ENCODE measurements at regions of chr4 and their contacts with region 1.

Region 1: DNA sequence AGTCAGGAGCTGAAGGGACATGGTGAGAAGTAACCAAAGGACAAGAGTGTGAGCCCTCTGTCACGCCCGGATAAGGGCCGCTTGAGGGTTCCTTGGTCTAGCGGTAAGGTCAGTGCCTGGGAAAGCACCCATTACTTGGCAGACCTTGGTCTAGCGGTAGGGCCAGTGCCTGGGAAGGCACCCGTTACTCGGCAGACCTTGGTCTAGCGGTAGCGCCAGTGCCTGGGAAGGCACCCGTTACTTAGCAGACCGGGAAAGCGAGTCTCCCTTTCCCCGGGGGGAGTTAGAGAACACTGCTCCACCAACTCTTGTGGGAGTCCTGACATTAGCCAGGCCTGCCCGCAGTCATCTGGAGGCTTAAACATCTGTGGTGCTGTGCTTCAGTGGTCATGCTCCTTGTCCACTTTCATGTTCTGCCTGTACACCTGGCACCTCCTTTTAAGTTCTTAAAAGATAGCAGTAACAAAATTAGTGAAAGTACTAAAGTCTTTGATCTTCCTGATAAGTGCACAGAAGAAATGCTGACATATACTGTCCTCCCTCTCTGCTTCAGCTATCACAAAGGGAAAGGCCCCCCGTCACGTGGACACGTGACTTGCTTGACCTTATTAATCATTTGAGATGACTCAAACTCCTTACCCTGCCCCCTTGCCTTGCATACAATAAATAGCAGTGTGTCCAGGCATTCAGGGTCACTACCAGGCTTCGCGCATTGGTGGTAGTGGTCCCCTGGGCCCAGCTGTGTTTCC is 9.3 kb upstream of the SEC24B start:
- DNase-seq: no peak
- H3K4me3 ChIP-seq: no peak overlapping the region
- H3K27ac ChIP-seq: no peak overlapping the region
- H3K4me1 ChIP-seq: peaks cover 14% of the 10 kb centered on the region
- H3K27me3 ChIP-seq: no peaks in the 10 kb centered on the region
- CTCF ChIP-seq: no peak
- POLR2A ChIP-seq: no peak

Region 2: DNA sequence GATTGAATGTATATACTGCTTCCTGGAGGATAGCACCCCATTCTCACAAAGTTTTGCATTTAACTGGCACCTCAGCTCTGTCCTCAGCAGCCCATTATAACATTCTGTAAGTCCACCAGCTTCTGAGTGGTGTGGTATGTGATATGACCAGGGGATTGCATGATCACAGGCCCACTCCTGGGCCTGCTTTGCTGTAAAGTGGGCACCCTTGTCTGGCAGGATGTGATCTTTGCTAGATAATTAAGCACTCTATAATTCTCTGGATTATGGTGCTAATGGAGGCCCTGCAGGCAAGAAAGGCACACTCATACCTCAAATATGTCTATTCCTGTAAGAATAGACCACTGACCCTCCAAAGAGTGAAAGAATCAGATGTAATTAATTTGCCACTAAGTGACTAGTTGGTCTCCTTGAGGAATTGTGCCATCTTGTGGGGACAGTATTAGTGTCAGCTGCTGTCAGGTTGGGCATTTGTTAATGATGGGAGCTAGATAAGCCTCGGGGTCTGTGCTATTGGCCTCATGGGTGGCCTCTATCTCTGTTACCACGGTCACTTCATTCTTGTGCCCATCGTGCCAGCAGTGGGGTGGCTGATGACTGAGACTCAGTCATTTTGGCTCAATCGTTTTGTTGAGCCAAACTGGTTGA is 379.8 kb after region 1 on chr4:
- CTCF ChIA-PET with region 1: interaction called, 22 read pairs
- POLR2A ChIA-PET with region 1: no interaction called
- dilution Hi-C with region 1: no loop called
- intact Hi-C with region 1: loop called (anchors 1 kb)
- DNase-seq: peak; percentile 56
- H3K4me3 ChIP-seq: no peak overlapping the region
- H3K27ac ChIP-seq: no peak overlapping the region
- H3K4me1 ChIP-seq: peaks cover 12% of the 10 kb centered on the region
- H3K27me3 ChIP-seq: no peaks in the 10 kb centered on the region
- CTCF ChIP-seq: peak; percentile 27 to 34
- POLR2A ChIP-seq: no peak

Region 3: DNA sequence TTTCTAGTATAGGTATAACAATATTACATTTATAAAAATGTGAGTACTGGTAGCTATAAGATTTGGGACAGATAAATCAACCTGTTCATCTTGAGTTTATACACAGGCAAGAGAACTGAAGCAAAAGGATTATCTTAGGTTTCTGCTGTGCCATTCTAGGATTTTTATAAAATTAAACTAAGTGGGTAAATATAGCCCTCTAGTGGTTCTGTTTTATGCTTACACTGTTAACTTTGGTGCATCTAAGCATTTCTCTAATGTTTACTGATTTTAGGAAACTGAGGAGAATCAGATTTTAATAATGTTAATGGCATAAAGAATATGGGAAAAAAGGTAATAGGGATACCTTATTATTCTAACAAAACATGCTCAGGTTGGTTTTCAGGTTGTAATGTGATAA is 402.5 kb after region 1 on chr4:
- CTCF ChIA-PET with region 1: interaction called, 30 read pairs
- POLR2A ChIA-PET with region 1: no interaction called
- dilution Hi-C with region 1: no loop called
- intact Hi-C with region 1: loop called (anchors 1 kb)
- DNase-seq: peak; percentile 38
- H3K4me3 ChIP-seq: no peak overlapping the region
- H3K27ac ChIP-seq: no peak overlapping the region
- H3K4me1 ChIP-seq: no peaks in the 10 kb centered on the region
- H3K27me3 ChIP-seq: no peaks in the 10 kb centered on the region
- CTCF ChIP-seq: peak; percentile 14 to 28
- POLR2A ChIP-seq: no peak

Region 4: GRCh38 chr4:109977854-109978501 is 553.7 kb after region 1 on chr4:
- CTCF ChIA-PET with region 1: interaction called, 23 read pairs
- POLR2A ChIA-PET with region 1: no interaction called
- dilution Hi-C with region 1: no loop called
- intact Hi-C with region 1: loop called (anchors 1 kb)
- DNase-seq: peak; percentile 51
- H3K4me3 ChIP-seq: no peak overlapping the region
- H3K27ac ChIP-seq: no peak overlapping the region
- H3K4me1 ChIP-seq: no peaks in the 10 kb centered on the region
- H3K27me3 ChIP-seq: peaks cover 17 to 20% of the 10 kb centered on the region in 2 experiments
- CTCF ChIP-seq: peak; percentile 34 to 43
- POLR2A ChIP-seq: no peak